HepG2 (cell line): ENCODE measurements at regions of chr9 and their contacts with region 1.

Region 1: GRCh38 chr9:36407122-36407723 is 7.2 kb upstream of the RNF38 start:
- DNase-seq: peak; percentile 63
- ATAC-seq: peak; percentile 99
- H3K4me3 ChIP-seq: no peak overlapping the region
- H3K27ac ChIP-seq: peak overlapping the region; percentile 8
- H3K4me1 ChIP-seq: peaks cover 24% of the 10 kb centered on the region
- H3K27me3 ChIP-seq: no peaks in the 10 kb centered on the region
- CTCF ChIP-seq: peak; percentile 79
- EP300 ChIP-seq: no peak
- POLR2A ChIP-seq: no peak
- RAD21 ChIP-seq: peak; percentile 84

Region 2: DNA sequence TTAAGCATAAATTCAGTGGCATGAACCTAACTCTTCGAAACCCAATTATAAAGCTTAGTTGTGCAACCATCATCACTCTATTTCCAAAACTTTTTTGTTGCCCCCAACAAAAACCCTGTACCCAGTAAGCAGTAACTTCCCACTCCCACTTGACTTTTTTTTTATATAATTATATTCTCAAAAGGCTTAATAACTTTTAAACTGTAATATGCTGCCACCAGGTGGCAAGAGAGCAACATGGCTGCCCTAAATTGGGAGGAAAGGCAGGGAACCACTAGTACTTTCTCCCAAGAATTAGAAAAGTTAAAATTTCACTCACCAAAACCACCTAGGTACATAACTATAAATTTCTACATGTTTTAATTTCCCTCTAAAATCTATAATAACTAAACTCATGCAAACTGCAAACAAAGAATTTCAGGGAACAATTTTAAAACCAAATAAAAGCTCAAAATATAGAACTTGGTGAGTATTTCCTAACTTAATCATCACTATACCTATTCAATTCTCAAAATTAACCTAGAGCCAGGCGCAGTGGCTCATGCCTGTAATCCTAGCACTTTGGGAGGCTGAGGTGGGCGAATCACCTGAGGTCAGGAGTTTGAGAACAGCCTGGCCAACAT is 43.0 kb after region 1 on chr9:
- CTCF ChIA-PET with region 1: interaction called, 106 read pairs
- POLR2A ChIA-PET with region 1: interaction called, 7 read pairs
- in situ Hi-C with region 1: loop called (anchors 5 kb)
- intact Hi-C with region 1: loop called (anchors 1 kb)
- DNase-seq: peak; percentile 66
- ATAC-seq: no peak
- H3K4me3 ChIP-seq: no peak overlapping the region
- H3K27ac ChIP-seq: no peak overlapping the region
- H3K4me1 ChIP-seq: peaks cover 14% of the 10 kb centered on the region
- H3K27me3 ChIP-seq: no peaks in the 10 kb centered on the region
- CTCF ChIP-seq: peak; percentile 58
- EP300 ChIP-seq: no peak
- POLR2A ChIP-seq: no peak
- RAD21 ChIP-seq: peak; percentile 50

Region 3: DNA sequence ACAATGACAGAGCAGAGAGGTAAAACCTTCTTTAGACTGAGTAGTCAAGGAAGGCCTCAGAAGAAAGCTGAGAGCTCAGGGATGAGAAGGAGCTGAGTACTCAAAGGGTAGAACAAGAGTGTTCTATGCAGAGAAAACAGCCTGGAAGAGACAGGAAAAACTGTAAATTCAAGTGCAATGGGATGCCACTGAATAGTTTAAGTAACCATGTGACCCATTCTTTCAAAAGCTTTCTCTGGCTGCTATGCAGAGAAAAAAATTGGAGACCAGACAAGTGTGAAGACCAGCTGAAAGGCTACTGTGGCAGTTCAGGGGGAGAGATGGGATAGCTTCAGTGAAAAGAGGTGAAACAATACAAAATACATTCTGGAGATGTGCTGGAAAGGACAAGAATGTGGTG is 54.1 kb after region 1 on chr9:
- CTCF ChIA-PET with region 1: no interaction called
- POLR2A ChIA-PET with region 1: no interaction called
- in situ Hi-C with region 1: no loop called
- intact Hi-C with region 1: no loop called
- DNase-seq: no peak
- ATAC-seq: no peak
- H3K4me3 ChIP-seq: no peak overlapping the region
- H3K27ac ChIP-seq: no peak overlapping the region
- H3K4me1 ChIP-seq: peaks cover 26% of the 10 kb centered on the region
- H3K27me3 ChIP-seq: no peaks in the 10 kb centered on the region
- CTCF ChIP-seq: no peak
- EP300 ChIP-seq: no peak
- POLR2A ChIP-seq: no peak
- RAD21 ChIP-seq: no peak

Region 4: DNA sequence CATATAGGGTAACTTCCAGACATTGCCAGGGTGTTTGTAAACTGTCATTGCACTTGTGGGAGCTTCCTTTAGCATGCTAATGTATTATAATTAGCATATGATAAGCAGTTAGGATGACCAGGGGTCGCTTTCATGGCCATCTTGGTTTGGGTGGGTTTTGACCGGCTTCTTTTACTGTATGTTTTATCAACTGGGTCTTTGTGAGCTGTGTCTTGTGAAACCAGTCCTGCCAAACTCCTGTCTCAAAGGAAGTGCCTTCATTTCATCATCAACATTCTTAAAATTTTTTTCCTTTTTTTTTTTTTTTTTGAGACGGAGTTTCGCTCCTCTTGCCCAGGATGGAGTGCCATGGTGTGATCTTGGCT is 153.6 kb after region 1 on chr9:
- CTCF ChIA-PET with region 1: interaction called, 59 read pairs
- POLR2A ChIA-PET with region 1: no interaction called
- in situ Hi-C with region 1: loop called (anchors 5 kb)
- intact Hi-C with region 1: loop called (anchors 1 kb)
- DNase-seq: no peak
- ATAC-seq: no peak
- H3K4me3 ChIP-seq: no peak overlapping the region
- H3K27ac ChIP-seq: no peak overlapping the region
- H3K4me1 ChIP-seq: peaks cover 8% of the 10 kb centered on the region
- H3K27me3 ChIP-seq: no peaks in the 10 kb centered on the region
- CTCF ChIP-seq: no peak
- EP300 ChIP-seq: no peak
- POLR2A ChIP-seq: no peak
- RAD21 ChIP-seq: no peak

Region 5: DNA sequence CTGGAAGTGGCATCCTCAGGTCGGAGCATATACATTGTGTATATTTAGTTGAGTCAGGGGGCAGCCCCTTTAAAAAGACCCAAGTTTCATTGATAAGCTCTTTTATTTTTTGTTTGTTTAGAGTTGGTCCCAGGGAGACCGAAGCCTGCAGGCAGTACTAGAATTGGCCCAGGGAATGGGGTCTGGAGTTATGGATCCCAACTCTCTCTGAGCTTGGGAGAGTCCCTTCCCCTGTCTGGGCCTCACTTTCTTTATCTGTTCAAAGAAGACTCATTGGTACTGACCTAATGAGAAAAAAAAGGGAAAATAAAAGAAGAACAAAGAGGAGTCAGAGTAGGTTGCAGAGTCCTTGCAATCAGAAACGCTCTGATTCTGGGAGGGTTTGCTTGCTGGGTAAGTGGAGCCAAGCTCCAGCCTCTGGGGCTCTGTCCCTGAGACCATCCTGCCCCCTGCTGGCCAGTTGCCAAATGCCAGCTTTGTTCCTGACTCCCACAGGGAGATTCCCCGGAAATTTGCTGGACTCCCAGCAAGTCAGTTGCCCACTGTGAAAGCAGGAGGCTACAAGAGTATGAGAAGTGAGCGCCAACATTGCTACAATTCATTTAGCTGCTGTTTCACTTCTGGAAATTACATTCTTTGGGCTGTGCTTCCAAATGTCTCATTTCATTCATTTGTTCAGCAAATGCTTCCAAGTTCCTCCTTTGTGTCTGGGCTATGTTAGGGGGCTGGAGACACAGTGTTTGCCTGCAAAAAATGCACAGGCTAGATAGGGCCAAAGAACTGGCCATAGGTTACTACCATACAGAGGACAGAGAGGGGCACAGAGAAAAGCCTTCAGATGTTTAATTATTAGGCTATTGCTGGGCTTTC is 321.7 kb after region 1 on chr9:
- CTCF ChIA-PET with region 1: no interaction called
- POLR2A ChIA-PET with region 1: no interaction called
- in situ Hi-C with region 1: no loop called
- intact Hi-C with region 1: loop called (anchors 5 kb)
- DNase-seq: peak; percentile 54
- ATAC-seq: peak; percentile 95
- H3K4me3 ChIP-seq: no peak overlapping the region
- H3K27ac ChIP-seq: no peak overlapping the region
- H3K4me1 ChIP-seq: no peaks in the 10 kb centered on the region; the same call in 1 of the 2 replicates
- H3K27me3 ChIP-seq: peaks cover 0 to 15% of the 10 kb centered on the region in 2 experiments; a peak in 3 of 5 replicates
- CTCF ChIP-seq: peak; percentile 89
- EP300 ChIP-seq: no peak
- POLR2A ChIP-seq: no peak
- RAD21 ChIP-seq: peak; percentile 78